ENCODE measurements at regions of chr21 and their contacts with region 1.

Region 1: DNA sequence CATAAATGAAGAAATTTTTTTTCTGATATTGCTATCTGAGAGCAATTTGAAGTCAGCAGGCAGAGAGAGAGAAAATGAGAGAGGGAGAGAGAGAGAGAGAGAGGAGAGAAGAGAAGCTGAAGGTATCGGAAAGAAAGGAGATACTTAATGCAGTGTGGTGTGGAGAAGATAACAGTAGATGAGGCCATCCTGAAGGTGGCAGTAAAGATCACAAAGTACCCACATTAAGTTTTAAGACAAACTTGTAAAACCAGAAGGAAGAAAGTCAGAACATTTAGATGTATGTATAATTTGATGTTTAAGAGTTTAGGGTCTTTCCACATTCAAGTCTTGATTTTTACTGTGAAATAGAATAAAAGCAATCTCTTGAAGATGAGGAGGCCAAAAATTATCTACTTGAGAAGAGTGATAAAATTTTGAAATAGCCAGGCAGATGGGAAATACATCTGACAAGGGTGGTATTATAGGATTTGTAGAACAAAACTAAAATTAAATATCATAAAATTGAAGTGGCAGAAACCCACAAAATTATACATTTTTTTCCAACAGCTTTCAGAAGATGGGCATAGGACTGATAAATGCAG is 1753.4 kb downstream of the MRPL39 start:
- DNase-seq: peak; percentile 14
- H3K4me3 Mint-ChIP-seq: no peak overlapping the region
- H3K27ac Mint-ChIP-seq: no peak overlapping the region
- H3K4me1 Mint-ChIP-seq: peaks cover 6% of the 10 kb centered on the region
- H3K27me3 Mint-ChIP-seq: peaks cover 3% of the 10 kb centered on the region

Region 2: DNA sequence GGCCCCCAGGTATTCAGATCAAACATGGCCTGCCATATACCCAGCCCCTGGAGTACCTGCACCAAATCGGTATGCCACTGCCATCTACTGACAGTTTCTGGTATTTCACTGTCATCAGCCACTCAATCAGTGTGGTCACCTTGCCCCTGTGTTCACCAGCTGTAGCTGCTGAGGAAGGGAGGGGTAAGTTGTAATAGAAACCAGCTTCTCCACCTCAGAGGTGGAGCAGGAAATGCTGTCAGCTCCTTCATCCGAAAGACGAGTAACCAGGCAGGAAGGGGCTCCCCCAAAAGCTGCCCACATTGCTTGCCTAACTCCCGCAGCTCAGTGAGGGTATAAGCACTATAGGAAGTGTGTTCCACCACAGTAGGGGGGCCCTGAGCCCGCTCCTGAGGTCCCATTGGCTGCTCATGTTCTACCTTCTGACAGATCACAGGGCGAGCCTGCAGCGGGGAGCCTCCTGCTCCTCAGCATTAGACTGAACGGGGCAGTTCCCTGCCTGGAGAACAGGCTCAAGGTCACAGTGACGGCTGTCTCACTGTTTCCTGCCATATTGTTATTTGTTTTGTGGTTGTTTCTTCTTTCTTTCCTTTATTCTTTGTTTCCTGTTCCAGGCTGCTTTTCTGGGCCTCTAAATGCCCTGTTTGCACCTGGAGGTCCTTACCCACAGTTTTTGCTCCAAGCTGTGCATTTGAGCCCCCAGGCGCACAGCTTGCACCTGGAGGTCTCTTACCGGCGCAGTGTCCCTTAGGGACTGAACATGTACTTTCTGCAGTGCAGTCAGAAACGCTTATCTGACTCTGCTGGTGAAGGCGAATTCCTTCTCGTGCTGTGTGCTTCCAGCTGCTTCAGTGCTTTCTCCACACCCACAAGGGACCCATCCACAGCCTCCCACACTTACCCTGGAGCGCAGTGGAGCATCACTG is 115.1 kb after region 1 on chr21:
- CTCF ChIA-PET with region 1: interaction called, 73 read pairs
- intact Hi-C with region 1: loop called (anchors 1 kb)
- DNase-seq: peak; percentile 88
- H3K4me3 Mint-ChIP-seq: no peak overlapping the region
- H3K27ac Mint-ChIP-seq: peak overlapping the region; percentile 71
- H3K4me1 Mint-ChIP-seq: peaks cover 12% of the 10 kb centered on the region
- H3K27me3 Mint-ChIP-seq: no peaks in the 10 kb centered on the region

Region 3: GRCh38 chr21:24045775-24046215 is 191.9 kb after region 1 on chr21:
- CTCF ChIA-PET with region 1: no interaction called
- intact Hi-C with region 1: loop called (anchors 1 kb)
- DNase-seq: peak; percentile 43
- H3K4me3 Mint-ChIP-seq: no peak overlapping the region
- H3K27ac Mint-ChIP-seq: no peak overlapping the region
- H3K4me1 Mint-ChIP-seq: peaks cover 21% of the 10 kb centered on the region
- H3K27me3 Mint-ChIP-seq: no peaks in the 10 kb centered on the region

Region 4: GRCh38 chr21:24076179-24076578 is 222.3 kb after region 1 on chr21:
- CTCF ChIA-PET with region 1: no interaction called
- intact Hi-C with region 1: loop called (anchors 2 kb)
- DNase-seq: no peak
- H3K4me3 Mint-ChIP-seq: no peak overlapping the region
- H3K27ac Mint-ChIP-seq: no peak overlapping the region
- H3K4me1 Mint-ChIP-seq: no peaks in the 10 kb centered on the region
- H3K27me3 Mint-ChIP-seq: no peaks in the 10 kb centered on the region